ENCODE measurements at regions of chr10 and their contacts with region 1.

Region 1: GRCh38 chr10:18400201-18400905 is 251.0 kb downstream of the NSUN6 start:
- DNase-seq: peak; percentile 54
- ATAC-seq: peak; percentile 75
- H3K4me3 ChIP-seq: no peak overlapping the region
- H3K27ac ChIP-seq: no peak overlapping the region
- H3K4me1 ChIP-seq: no peaks in the 10 kb centered on the region
- H3K27me3 ChIP-seq: no peaks in the 10 kb centered on the region
- CTCF ChIP-seq: no peak
- EP300 ChIP-seq: peak; percentile 90 to 94; a peak in 3 of 4 replicates
- POLR2A ChIP-seq: no peak
- RAD21 ChIP-seq: no peak

Region 2: DNA sequence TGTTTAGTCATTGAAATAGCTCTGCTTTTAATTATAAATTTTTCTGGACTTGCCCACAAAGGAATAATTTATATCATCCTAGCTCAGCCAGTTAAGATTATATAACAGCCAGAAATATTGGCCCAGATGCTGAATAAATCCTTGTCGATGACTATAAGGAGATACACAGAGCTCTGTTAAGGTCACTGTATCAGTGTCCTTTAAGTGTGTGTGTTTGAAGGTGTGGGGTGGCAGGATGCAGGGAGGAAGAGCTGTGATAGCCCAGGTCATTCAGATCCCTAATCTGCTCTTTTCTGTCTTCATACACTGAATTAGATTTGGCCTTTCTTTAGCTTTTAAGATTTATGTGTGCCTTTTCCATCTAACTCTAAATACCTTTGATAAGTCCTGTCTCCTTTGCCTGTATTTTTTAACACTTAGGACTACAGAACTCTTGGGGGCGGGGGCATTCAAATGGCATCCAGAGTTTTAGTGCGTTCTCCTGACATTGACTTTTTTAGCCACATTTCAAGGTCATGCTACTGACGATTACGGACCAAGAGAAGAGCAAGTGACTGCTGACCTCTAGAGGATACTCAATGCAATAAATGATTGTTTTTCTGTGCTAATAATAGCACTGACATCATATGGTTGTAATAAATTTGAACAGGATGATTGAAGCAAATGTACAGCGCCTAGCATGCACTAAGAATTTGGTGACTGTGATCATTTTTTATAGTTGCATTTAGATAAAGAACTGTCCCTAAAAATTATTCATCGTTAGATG is 87.8 kb before region 1 on chr10:
- CTCF ChIA-PET with region 1: interaction called, 5 read pairs
- POLR2A ChIA-PET with region 1: interaction called, 4 read pairs
- RAD21 ChIA-PET with region 1: interaction called, 7 read pairs
- SMC1A ChIA-PET with region 1: interaction called, 13 read pairs
- in situ Hi-C with region 1: no loop called
- intact Hi-C with region 1: no loop called
- DNase-seq: no peak
- ATAC-seq: peak; percentile 91
- H3K4me3 ChIP-seq: no peak overlapping the region
- H3K27ac ChIP-seq: no peak overlapping the region
- H3K4me1 ChIP-seq: no peaks in the 10 kb centered on the region
- H3K27me3 ChIP-seq: no peaks in the 10 kb centered on the region
- CTCF ChIP-seq: peak; percentile 50 to 77 (median 52); a peak in 5 of 6 replicates
- EP300 ChIP-seq: no peak
- POLR2A ChIP-seq: no peak
- RAD21 ChIP-seq: peak; percentile 68

Region 3: GRCh38 chr10:18418541-18419215 is 18.3 kb after region 1 on chr10:
- CTCF ChIA-PET with region 1: interaction called, 16 read pairs
- POLR2A ChIA-PET with region 1: interaction called, 63 read pairs
- RAD21 ChIA-PET with region 1: interaction called, 103 read pairs
- SMC1A ChIA-PET with region 1: interaction called, 163 read pairs
- in situ Hi-C with region 1: no loop called
- intact Hi-C with region 1: loop called (anchors 1 kb)
- DNase-seq: no peak
- ATAC-seq: peak; percentile 75
- H3K4me3 ChIP-seq: no peak overlapping the region
- H3K27ac ChIP-seq: no peak overlapping the region
- H3K4me1 ChIP-seq: no peaks in the 10 kb centered on the region
- H3K27me3 ChIP-seq: no peaks in the 10 kb centered on the region
- CTCF ChIP-seq: no peak
- EP300 ChIP-seq: peak; percentile 40 to 52; a peak in 2 of 4 replicates
- POLR2A ChIP-seq: no peak
- RAD21 ChIP-seq: no peak

Region 4: DNA sequence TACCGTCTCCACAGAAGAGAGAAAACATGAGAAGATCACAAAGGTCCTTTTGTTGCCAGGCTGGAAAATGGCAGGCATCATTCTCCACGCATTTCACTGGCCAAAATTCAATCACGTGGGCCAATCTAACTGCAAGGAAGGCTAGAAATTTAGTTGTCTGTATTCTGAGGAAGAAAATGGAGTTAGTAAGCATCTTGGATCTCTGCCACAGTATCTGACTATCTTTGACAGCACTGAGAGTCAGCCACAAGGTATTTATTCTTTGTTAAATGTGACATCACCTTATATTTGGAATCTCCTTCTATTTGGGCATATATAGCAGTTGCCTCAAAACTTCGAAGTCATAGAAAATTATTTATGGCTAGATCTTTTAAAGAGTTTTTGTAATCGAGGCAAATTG is 37.1 kb after region 1 on chr10:
- CTCF ChIA-PET with region 1: interaction called, 4 read pairs
- POLR2A ChIA-PET with region 1: interaction called, 6 read pairs
- RAD21 ChIA-PET with region 1: interaction called, 12 read pairs
- SMC1A ChIA-PET with region 1: interaction called, 29 read pairs
- in situ Hi-C with region 1: no loop called
- intact Hi-C with region 1: no loop called
- DNase-seq: no peak
- ATAC-seq: no peak
- H3K4me3 ChIP-seq: no peak overlapping the region
- H3K27ac ChIP-seq: no peak overlapping the region
- H3K4me1 ChIP-seq: no peaks in the 10 kb centered on the region
- H3K27me3 ChIP-seq: no peaks in the 10 kb centered on the region
- CTCF ChIP-seq: no peak
- EP300 ChIP-seq: no peak
- POLR2A ChIP-seq: no peak
- RAD21 ChIP-seq: no peak

Region 5: GRCh38 chr10:18456984-18457383 is 56.6 kb after region 1 on chr10:
- CTCF ChIA-PET with region 1: interaction called, 5 read pairs
- POLR2A ChIA-PET with region 1: interaction called, 3 read pairs
- RAD21 ChIA-PET with region 1: interaction called, 21 read pairs
- SMC1A ChIA-PET with region 1: interaction called, 34 read pairs
- in situ Hi-C with region 1: no loop called
- intact Hi-C with region 1: loop called (anchors 5 kb)
- DNase-seq: peak; percentile 55
- ATAC-seq: peak; percentile 99
- H3K4me3 ChIP-seq: no peak overlapping the region
- H3K27ac ChIP-seq: no peak overlapping the region
- H3K4me1 ChIP-seq: peaks cover 4% of the 10 kb centered on the region; the same call in 1 of the 2 replicates
- H3K27me3 ChIP-seq: no peaks in the 10 kb centered on the region
- CTCF ChIP-seq: no peak
- EP300 ChIP-seq: peak; percentile 17 to 73; a peak in 3 of 4 replicates
- POLR2A ChIP-seq: no peak
- RAD21 ChIP-seq: no peak

Region 6: DNA sequence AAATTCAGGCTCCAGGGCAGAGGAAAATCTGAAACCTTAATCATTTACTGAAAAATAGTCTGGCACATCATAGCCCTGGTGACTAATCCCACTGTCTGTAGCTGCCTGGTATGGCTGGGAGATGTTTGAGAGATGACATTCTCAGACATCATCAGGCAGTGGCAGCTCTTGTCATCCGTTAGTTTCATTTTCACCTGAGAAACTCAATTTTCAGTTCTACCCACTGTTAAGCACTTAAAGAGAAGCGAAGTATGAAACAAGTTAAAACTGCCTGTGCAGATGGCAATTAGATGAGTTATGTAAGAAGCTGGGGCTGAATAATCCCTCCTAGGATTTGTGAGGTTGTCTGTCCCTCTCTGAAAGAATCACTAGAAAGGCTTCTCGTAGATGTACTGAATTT is 100.8 kb after region 1 on chr10:
- CTCF ChIA-PET with region 1: no interaction called
- POLR2A ChIA-PET with region 1: no interaction called
- RAD21 ChIA-PET with region 1: interaction called, 11 read pairs
- SMC1A ChIA-PET with region 1: interaction called, 9 read pairs
- in situ Hi-C with region 1: no loop called
- intact Hi-C with region 1: no loop called
- DNase-seq: peak; percentile 50
- ATAC-seq: peak; percentile 98
- H3K4me3 ChIP-seq: no peak overlapping the region
- H3K27ac ChIP-seq: no peak overlapping the region
- H3K4me1 ChIP-seq: peaks cover 3% of the 10 kb centered on the region; the same call in 1 of the 2 replicates
- H3K27me3 ChIP-seq: no peaks in the 10 kb centered on the region
- CTCF ChIP-seq: no peak
- EP300 ChIP-seq: no peak; a peak in 1 of 4 replicates
- POLR2A ChIP-seq: no peak
- RAD21 ChIP-seq: no peak

Region 7: DNA sequence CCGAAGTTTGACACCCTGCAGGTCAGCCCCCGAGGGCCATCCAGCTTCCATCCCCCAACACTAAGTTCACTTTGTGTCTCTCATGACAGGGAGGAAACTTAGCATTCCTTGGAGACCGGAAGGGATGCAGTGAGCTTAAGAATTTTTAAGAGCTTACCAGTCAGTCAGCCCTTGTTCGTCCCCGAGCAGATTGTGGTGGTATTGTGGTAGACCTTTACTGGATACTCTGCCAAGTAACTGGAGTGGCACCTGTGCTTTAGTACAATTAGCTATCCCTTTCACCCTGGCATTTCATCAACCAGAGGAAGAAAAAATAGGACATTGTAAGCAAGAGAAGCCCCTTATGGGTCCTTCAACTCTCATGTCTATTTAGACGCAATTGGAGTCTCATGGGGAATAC is 176.2 kb after region 1 on chr10:
- CTCF ChIA-PET with region 1: no interaction called
- POLR2A ChIA-PET with region 1: no interaction called
- RAD21 ChIA-PET with region 1: no interaction called
- SMC1A ChIA-PET with region 1: no interaction called
- in situ Hi-C with region 1: no loop called
- intact Hi-C with region 1: no loop called
- DNase-seq: no peak
- ATAC-seq: no peak
- H3K4me3 ChIP-seq: no peak overlapping the region
- H3K27ac ChIP-seq: no peak overlapping the region
- H3K4me1 ChIP-seq: no peaks in the 10 kb centered on the region
- H3K27me3 ChIP-seq: no peaks in the 10 kb centered on the region
- CTCF ChIP-seq: no peak
- EP300 ChIP-seq: no peak
- POLR2A ChIP-seq: no peak
- RAD21 ChIP-seq: no peak

Measured in GM12878 (cell line).